PC-9 (cell line): ENCODE measurements at regions of chr7 and their contacts with region 1.

Region 1: DNA sequence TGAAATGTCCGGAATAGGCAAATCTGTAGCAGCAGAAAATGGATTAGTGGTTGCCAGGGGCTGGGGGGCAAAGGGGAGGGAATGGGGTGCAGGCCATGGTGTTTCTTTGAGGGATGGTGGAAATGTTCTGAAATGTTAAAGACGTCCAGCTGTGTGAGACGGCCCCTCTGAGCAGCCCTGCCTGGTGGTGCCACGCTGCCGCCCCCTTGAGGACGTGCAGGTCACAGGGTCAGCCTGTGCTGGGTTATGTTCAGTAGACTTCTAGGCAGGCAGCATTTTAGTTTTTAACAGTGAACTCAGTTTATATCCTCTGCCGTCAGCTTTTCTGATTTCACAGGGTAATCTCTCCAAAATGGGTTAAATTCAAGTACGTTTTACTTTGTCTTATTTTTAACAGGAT is 9.4 kb downstream of the NUB1 start:
- DNase-seq: no peak
- H3K4me3 ChIP-seq: no peak overlapping the region
- H3K27ac ChIP-seq: no peak overlapping the region
- H3K4me1 ChIP-seq: peaks cover 8% of the 10 kb centered on the region
- H3K27me3 ChIP-seq: no peaks in the 10 kb centered on the region
- CTCF ChIP-seq: no peak

Region 2: GRCh38 chr7:151074817-151075643 is 276.0 kb before region 1 on chr7:
- CTCF ChIA-PET with region 1: interaction called, 10 read pairs
- POLR2A ChIA-PET with region 1: no interaction called
- intact Hi-C with region 1: no loop called
- DNase-seq: no peak
- H3K4me3 ChIP-seq: no peak overlapping the region
- H3K27ac ChIP-seq: no peak overlapping the region
- H3K4me1 ChIP-seq: peaks cover 6% of the 10 kb centered on the region
- H3K27me3 ChIP-seq: no peaks in the 10 kb centered on the region
- CTCF ChIP-seq: no peak

Region 3: GRCh38 chr7:151286148-151286547 is 64.9 kb before region 1 on chr7:
- CTCF ChIA-PET with region 1: no interaction called
- POLR2A ChIA-PET with region 1: no interaction called
- intact Hi-C with region 1: no loop called
- DNase-seq: no peak
- H3K4me3 ChIP-seq: no peak overlapping the region
- H3K27ac ChIP-seq: no peak overlapping the region
- H3K4me1 ChIP-seq: no peaks in the 10 kb centered on the region
- H3K27me3 ChIP-seq: peaks cover 95% of the 10 kb centered on the region
- CTCF ChIP-seq: no peak

Region 4: GRCh38 chr7:151511946-151512345 is 160.9 kb after region 1 on chr7:
- CTCF ChIA-PET with region 1: no interaction called
- POLR2A ChIA-PET with region 1: no interaction called
- intact Hi-C with region 1: loop called (anchors 5 kb)
- DNase-seq: no peak
- H3K4me3 ChIP-seq: no peak overlapping the region
- H3K27ac ChIP-seq: no peak overlapping the region
- H3K4me1 ChIP-seq: peaks cover 34% of the 10 kb centered on the region
- H3K27me3 ChIP-seq: no peaks in the 10 kb centered on the region
- CTCF ChIP-seq: no peak

Region 5: GRCh38 chr7:151542606-151543130 is 191.6 kb after region 1 on chr7:
- CTCF ChIA-PET with region 1: no interaction called
- POLR2A ChIA-PET with region 1: no interaction called
- intact Hi-C with region 1: no loop called
- DNase-seq: no peak
- H3K4me3 ChIP-seq: no peak overlapping the region
- H3K27ac ChIP-seq: no peak overlapping the region
- H3K4me1 ChIP-seq: no peaks in the 10 kb centered on the region
- H3K27me3 ChIP-seq: no peaks in the 10 kb centered on the region
- CTCF ChIP-seq: no peak